ENCODE measurements at regions of chr3 and their contacts with region 1.

Region 1: DNA sequence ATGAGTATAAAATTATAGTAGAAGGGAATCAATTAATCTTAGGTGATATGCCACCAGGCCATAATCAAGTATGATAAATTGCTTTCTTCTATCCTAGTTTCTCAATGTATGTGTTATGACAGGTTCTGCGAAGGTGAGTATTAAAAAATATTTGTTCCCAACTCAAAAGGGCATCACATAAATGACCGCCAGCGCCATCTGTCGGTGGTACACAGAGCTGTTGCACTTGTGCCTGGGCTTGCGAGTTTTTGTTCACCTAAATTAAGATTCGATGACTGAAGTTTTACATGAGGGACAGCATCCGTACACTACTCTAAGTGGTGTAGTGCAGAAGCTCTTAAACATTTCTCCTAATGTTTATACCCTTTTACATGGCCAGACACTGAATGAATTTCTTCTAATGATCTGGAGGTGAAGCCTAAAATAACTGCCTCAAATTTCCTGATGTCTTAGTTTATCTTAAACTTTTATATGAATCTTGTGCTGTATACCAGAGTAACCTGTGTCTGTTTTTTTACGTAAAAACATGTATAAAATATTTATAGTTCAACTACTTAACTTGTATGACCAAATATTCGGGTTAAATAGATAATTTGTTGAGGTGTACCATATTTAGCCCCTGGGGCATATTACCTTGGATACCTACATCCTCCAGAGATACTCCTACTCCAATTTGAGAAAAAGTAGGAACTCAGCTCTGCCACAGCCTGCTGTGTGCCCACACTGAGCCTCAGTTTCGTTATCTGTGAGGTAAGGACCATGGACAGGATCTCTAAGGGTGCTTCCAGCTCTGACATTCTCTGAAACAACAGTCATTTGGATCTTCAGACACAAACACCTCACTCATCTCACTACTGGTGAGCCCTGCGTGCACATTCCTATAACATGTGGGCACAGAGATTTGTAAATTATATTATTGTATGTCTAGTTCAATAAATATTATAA is 365.6 kb downstream of the MAGI1 start:
- DNase-seq: peak; percentile 30 to 92 (median 80)

Region 2: GRCh38 chr3:65126527-65127410 is 546.4 kb before region 1 on chr3:
- intact Hi-C with region 1: no loop called
- DNase-seq: no peak

Region 3: DNA sequence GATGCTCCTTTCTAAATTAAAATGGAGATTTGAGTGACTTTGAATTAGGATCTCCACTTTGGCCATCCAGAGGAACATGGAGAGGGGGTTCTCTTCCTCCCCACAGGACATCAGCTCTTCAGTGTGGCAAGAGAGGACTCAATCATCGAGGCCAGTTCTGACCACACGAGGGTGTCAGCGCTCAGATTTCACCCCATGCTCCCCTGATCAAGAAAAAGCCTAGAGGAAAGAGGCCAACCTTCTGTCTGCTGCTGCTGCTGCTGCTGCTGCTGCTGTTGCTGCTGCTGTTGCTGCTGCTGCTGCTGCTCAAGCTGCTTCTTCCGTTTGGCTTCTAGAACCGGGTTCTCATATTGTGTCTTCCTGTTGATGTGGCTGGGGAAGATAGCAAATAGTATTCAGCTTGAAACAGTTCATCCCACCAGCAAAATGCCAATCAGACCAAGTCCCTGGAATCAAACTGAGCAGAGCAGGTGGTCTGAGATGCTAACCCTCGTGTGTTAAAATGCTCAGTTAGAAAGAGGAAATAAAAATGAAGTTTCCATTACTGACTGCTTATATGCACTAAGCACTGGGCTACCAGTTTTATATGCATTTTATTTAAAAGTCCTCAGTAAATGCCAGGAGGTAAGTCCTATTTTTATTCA is 233.4 kb before region 1 on chr3:
- intact Hi-C with region 1: loop called (anchors 10 kb)
- DNase-seq: peak; percentile 20 to 88 (median 68)

Region 4: DNA sequence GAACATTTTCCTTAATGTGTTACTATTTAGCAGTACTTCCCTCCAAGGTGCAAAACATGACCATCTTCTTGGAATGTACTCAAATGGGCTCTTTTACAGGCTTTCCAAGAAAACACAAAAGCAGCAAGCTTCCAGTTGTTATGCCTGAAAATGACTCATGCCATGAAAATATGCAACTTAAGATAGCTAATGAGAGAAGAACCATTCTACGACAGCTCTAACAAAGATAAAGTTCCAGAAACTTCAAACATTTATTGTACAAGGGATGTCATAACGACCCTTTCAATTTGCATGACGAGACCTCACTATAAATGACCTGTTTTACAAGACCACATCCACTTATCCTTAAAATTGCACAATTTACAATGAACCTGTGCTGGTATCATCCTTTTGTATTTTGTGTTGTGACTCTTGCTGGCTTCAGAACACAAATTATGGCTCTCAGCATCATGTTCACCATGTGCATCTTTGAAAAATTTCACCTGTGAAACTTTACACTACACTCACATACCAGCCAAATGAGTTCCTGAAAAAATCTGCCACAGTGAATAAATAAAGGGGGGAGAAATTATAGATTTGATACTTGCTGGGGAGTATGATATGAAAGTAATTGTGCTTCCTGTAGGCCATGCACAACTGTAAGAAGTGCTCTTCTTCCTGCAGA is 68.1 kb before region 1 on chr3:
- intact Hi-C with region 1: loop called (anchors 10 kb)
- DNase-seq: no peak

Measured in head of caudate nucleus (tissue), 42 donors.